CD8-positive, alpha-beta T cell (primary cell): ENCODE measurements at regions of chr19 and their contacts with region 1.

Region 1: GRCh38 chr19:18251587-18252369 is 22.5 kb downstream of the IQCN start:
- DNase-seq: peak; percentile 67 to 90 (median 83)
- ATAC-seq: peak; percentile 95
- H3K4me3 ChIP-seq: no peak overlapping the region
- H3K4me3 Mint-ChIP-seq: no peak overlapping the region
- H3K27ac ChIP-seq: no peak overlapping the region
- H3K27ac Mint-ChIP-seq: no peak overlapping the region
- H3K4me1 ChIP-seq: no peaks in the 10 kb centered on the region
- H3K4me1 Mint-ChIP-seq: peaks cover 1% of the 10 kb centered on the region
- H3K27me3 ChIP-seq: peaks cover 0 to 11% of the 10 kb centered on the region in 2 experiments
- H3K27me3 Mint-ChIP-seq: peaks cover 24% of the 10 kb centered on the region
- CTCF ChIP-seq: peak; percentile 83

Region 2: DNA sequence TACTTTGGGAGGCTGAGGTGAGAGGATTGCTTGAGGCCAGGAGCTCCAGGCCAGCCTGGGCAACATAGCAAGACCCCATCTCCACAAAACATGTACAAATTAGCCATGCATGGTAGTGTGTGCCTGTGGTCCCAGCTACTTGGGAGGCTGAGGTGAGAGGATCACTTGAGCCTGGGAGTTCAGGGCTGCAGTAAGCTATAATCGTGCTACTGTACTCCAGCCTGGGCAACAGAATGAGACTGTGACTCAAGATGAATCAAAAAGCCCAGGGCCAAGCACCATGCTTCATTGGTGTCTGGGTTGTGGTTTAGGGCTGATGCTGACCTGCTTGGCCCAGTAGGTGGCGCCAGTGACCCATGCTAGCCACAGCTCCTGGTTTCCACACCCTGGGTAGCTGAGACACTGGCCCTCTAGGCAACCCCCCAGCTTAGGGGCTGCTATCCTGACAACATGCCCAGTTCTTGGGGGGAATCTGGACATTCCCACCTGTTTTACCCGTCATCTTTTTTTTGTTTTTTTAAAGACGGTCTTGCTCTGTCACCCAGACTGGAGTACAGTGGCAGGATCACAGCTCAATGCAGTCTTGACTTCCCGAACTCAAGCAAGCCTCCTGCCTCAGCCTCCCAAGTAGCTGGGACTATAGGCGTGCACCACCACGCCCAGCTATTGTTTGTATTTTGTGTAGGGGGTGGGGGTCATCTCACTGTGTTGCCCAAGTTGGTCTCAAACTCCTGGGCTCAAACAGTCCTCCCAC is 313.5 kb before region 1 on chr19:
- CTCF ChIA-PET with region 1: interaction called, 11 read pairs
- POLR2A ChIA-PET with region 1: no interaction called
- intact Hi-C with region 1: loop called (anchors 2 to 5 kb)
- DNase-seq: peak; percentile 69 to 90 (median 83)
- ATAC-seq: peak; percentile 99
- H3K4me3 ChIP-seq: no peak overlapping the region
- H3K4me3 Mint-ChIP-seq: no peak overlapping the region
- H3K27ac ChIP-seq: no peak overlapping the region
- H3K27ac Mint-ChIP-seq: no peak overlapping the region
- H3K4me1 ChIP-seq: peaks cover 7% of the 10 kb centered on the region
- H3K4me1 Mint-ChIP-seq: peaks cover 8% of the 10 kb centered on the region
- H3K27me3 ChIP-seq: no peaks in the 10 kb centered on the region
- H3K27me3 Mint-ChIP-seq: no peaks in the 10 kb centered on the region
- CTCF ChIP-seq: peak; percentile 82

Region 3: GRCh38 chr19:18117692-18118378 is 133.9 kb before region 1 on chr19:
- CTCF ChIA-PET with region 1: interaction called, 26 read pairs
- POLR2A ChIA-PET with region 1: no interaction called
- intact Hi-C with region 1: loop called in 1 of 2 experiments (anchors 1 kb)
- DNase-seq: peak; percentile 91 to 99 (median 96)
- ATAC-seq: peak; percentile 80
- H3K4me3 ChIP-seq: peak overlapping the region; percentile 58 to 85
- H3K4me3 Mint-ChIP-seq: peak overlapping the region; percentile 88
- H3K27ac ChIP-seq: peak overlapping the region; percentile 66 to 70
- H3K27ac Mint-ChIP-seq: peak overlapping the region; percentile 96
- H3K4me1 ChIP-seq: peaks cover 32% of the 10 kb centered on the region
- H3K4me1 Mint-ChIP-seq: peaks cover 38% of the 10 kb centered on the region
- H3K27me3 ChIP-seq: no peaks in the 10 kb centered on the region
- H3K27me3 Mint-ChIP-seq: no peaks in the 10 kb centered on the region
- CTCF ChIP-seq: no peak

Region 4: GRCh38 chr19:18179957-18180356 is 71.8 kb before region 1 on chr19:
- CTCF ChIA-PET with region 1: interaction called, 27 read pairs
- POLR2A ChIA-PET with region 1: no interaction called
- intact Hi-C with region 1: no loop called
- DNase-seq: no peak
- ATAC-seq: no peak
- H3K4me3 ChIP-seq: no peak overlapping the region
- H3K4me3 Mint-ChIP-seq: no peak overlapping the region
- H3K27ac ChIP-seq: no peak overlapping the region
- H3K27ac Mint-ChIP-seq: no peak overlapping the region
- H3K4me1 ChIP-seq: no peaks in the 10 kb centered on the region
- H3K4me1 Mint-ChIP-seq: no peaks in the 10 kb centered on the region
- H3K27me3 ChIP-seq: peaks cover 0 to 4% of the 10 kb centered on the region in 2 experiments
- H3K27me3 Mint-ChIP-seq: no peaks in the 10 kb centered on the region
- CTCF ChIP-seq: no peak

Region 5: DNA sequence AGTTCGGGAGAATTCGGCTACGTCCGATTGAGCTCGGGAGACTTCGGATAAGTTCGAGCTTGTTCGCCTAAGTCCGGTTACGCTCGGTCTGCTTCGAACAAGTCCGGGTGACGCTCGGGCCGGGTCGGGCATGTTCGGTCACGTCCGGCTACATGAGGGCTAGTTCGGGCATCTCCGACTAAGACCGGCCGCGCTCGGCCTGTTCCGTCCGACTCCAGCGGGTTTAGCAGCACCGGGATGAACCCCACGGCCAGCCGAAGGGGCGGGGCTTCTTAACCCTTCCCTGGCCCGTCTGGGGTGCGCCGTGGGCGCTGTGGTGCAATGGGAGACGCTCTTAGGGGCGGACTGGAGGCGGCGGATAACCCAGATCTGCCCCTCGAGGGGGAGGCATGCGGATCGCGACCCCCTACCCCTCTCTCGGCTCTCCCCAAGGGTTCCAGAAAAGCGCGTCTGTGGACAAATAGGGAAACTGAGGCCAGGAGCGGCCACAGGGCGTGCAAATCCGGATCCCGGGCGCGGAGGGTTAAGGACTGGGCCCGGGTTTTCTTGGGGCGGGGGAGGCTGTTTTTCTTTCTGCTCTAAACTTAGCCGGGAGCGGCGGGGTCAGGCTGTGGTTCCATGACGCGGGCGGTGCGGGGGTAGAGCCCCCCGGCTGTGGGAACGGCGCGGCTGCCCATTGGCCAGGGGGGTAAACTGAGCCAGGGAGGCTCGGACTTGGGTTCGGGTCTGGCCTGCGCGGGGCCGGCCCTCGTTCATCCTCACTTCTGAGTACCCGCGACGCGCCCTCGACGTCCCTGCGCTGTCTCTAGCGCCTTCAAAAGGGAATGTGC is 27.0 kb before region 1 on chr19:
- CTCF ChIA-PET with region 1: interaction called, 16 read pairs
- POLR2A ChIA-PET with region 1: no interaction called
- intact Hi-C with region 1: no loop called
- DNase-seq: peak; percentile 61 to 90 (median 81)
- ATAC-seq: peak; percentile 92
- H3K4me3 ChIP-seq: peak overlapping the region; percentile 41 to 54
- H3K4me3 Mint-ChIP-seq: peak overlapping the region; percentile 80
- H3K27ac ChIP-seq: no peak overlapping the region
- H3K27ac Mint-ChIP-seq: no peak overlapping the region
- H3K4me1 ChIP-seq: peaks cover 20% of the 10 kb centered on the region
- H3K4me1 Mint-ChIP-seq: peaks cover 18% of the 10 kb centered on the region
- H3K27me3 ChIP-seq: peaks cover 35 to 43% of the 10 kb centered on the region in 2 experiments
- H3K27me3 Mint-ChIP-seq: peaks cover 55% of the 10 kb centered on the region
- CTCF ChIP-seq: no peak

Region 6: DNA sequence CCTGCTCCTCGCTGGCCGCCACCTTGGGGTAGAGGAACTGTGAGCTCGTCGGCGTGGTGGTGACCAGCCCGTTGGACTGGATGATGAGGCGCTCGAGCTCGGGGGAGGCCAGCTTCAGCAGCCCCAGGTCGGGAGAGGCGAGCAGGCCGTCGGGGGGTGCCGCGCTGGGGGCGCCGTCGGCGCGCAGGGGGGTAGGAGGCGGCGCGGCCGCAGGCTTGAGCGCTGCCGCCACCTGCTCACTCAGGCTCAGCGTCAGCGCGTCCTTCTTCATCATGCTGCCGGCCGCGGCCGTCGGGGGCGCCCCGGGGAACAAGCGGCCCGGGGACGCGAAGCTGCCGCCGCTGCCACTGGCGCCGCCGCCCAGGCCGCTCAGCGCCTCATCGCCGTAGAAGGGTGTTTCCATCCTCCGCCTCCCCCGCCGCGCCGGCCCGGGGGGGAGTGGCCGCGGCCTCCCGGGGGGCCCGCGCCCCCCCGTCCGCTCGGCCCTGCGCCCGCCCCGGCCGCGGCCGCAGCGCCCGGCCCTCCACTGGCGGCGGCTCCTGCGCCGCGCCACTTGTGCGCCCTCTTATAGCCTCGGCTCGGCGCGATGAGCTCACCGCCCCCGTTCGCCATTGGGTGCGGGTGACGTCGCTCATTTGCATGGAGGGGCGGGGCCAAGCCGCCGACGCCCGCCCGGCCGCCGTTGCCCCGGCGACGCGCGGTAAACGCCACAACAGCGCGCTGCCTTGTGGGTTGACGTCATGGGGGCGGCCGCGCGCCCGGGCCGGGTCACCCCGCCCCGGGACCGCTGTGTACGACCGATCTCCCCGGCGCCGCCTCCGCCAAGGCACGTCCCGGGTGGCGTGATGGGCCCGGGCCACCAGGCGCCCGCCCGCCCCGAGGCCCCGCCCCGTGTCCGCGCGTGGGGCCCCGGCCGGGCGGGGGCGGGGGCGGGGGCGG is 29.6 kb after region 1 on chr19 and contains the start of gene JUND:
- CTCF ChIA-PET with region 1: interaction called, 32 read pairs
- POLR2A ChIA-PET with region 1: interaction called, 7 read pairs
- intact Hi-C with region 1: no loop called
- DNase-seq: peak; percentile 95 to 100 (median 98)
- ATAC-seq: peak; percentile 63
- H3K4me3 ChIP-seq: peak within 1 kb of the TSS; percentile 97 to 98
- H3K4me3 Mint-ChIP-seq: peak within 1 kb of the TSS; percentile 97
- H3K27ac ChIP-seq: peak within 1 kb of the TSS; percentile 99 to 100
- H3K27ac Mint-ChIP-seq: peak within 1 kb of the TSS; percentile 98
- H3K4me1 ChIP-seq: peaks cover 39% of the 10 kb centered on the region
- H3K4me1 Mint-ChIP-seq: peaks cover 47% of the 10 kb centered on the region
- H3K27me3 ChIP-seq: no peaks in the 10 kb centered on the region
- H3K27me3 Mint-ChIP-seq: no peaks in the 10 kb centered on the region
- CTCF ChIP-seq: no peak
- total RNA-seq, gene JUND: 1,995 to 2,125 TPM

Region 7: GRCh38 chr19:18388100-18388959 is 136.6 kb after region 1 on chr19:
- CTCF ChIA-PET with region 1: interaction called, 13 read pairs
- POLR2A ChIA-PET with region 1: no interaction called
- intact Hi-C with region 1: no loop called
- DNase-seq: peak; percentile 58 to 89 (median 76)
- ATAC-seq: peak; percentile 93
- H3K4me3 ChIP-seq: peak overlapping the region; percentile 38 to 43
- H3K4me3 Mint-ChIP-seq: peak overlapping the region; percentile 77
- H3K27ac ChIP-seq: no peak overlapping the region
- H3K27ac Mint-ChIP-seq: no peak overlapping the region
- H3K4me1 ChIP-seq: peaks cover 8% of the 10 kb centered on the region
- H3K4me1 Mint-ChIP-seq: peaks cover 8% of the 10 kb centered on the region
- H3K27me3 ChIP-seq: peaks cover 20 to 21% of the 10 kb centered on the region in 2 experiments
- H3K27me3 Mint-ChIP-seq: peaks cover 24% of the 10 kb centered on the region
- CTCF ChIP-seq: peak; percentile 99